HEK293T (cell line): ENCODE measurements at regions of chr1 and their contacts with region 1.

Region 1: GRCh38 chr1:46132529-46133180 is at the start of gene PIK3R3:
- DNase-seq: peak; percentile 95

Region 2: GRCh38 chr1:45892068-45892785 is 240.4 kb before region 1 on chr1:
- CTCF ChIA-PET with region 1: no interaction called
- POLR2A ChIA-PET with region 1: no interaction called
- DNase-seq: no peak

Region 3: DNA sequence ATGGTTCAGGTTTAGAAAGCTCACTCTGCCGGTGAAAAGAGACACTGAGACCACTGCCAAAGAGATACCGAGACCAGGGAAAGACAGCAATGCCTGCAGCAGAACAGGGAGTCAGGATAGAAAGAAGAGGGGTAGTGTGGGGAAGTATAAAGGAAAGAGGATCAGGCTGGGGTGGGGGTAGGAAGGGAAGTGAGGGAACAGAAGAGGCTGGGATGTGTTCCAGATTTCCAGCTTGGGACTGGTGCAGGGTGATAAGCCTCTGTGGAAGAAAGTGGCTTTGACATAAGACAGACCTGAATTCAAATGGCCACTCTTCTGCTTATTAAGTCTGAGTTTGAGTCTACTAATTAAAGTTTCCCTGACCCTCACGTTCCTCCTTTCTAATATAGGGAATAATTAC is 106.1 kb before region 1 on chr1:
- CTCF ChIA-PET with region 1: no interaction called
- POLR2A ChIA-PET with region 1: no interaction called
- DNase-seq: no peak

Region 4: DNA sequence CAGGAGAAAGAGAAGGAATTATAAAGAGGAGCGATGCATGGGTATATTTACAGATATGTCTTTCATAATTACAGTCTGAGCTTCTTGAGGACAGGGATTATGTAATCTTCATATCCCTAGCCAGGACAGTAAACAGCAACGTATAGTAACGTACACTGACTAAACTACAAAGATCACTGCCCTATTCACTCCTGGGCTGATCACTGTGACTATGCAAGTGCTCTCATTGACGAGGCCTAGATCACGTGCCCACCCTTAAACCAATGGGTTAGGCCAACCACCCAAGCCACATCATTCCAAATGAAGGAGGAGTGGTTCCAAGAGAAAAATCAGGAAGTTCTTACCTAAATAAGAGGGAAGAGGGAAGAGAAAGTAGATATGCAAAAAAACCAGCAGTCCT is 18.7 kb before region 1 on chr1:
- CTCF ChIA-PET with region 1: interaction called, 3 read pairs
- POLR2A ChIA-PET with region 1: interaction called, 10 read pairs
- DNase-seq: no peak

Region 5: DNA sequence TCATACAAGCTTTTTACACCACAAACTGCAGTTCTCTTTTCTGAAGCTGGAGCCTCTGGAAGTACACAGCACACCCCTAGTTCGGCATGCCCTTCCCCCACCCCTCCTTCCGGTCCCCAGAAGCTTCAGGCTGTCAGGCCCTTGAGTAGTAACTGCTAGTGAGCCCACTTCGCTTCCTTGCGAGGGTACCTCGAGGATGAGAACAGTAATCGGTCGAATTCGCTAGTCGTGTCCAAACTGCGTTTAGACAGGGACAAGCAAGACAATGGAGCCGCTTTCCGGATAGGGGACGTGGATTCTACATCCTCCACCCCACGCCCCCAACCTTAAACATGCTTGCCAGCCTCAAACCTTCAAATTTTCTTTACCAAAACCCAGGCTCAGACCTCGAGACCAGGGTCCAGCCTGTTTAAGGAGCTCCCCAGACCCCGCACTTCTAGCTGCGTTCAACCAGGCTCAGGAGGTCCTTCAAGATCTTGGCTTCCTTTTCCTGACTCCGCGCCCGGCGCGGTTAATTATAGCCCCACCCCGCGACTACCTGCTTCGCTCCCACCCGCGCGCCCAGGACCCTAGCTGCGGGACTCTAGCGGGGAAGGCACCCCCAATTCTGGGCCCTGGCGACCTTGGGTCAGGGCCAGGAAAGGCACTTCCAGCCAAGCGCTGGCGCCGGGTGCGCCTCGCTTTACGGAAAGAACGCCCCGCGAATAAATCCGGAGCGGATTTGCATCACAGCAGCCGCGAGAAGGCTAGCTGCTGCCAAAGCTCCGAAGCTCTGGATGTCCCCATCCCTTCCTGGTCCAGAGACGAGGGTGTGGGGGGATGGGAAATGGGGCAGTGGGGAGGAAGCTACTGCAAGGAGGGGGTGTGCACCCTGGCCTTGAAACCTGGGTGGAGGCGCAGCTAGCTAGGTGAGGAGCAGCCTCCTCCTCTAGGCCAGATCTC is 34.1 kb after region 1 on chr1:
- CTCF ChIA-PET with region 1: interaction called, 3 read pairs
- POLR2A ChIA-PET with region 1: interaction called, 10 read pairs
- DNase-seq: no peak

Region 6: DNA sequence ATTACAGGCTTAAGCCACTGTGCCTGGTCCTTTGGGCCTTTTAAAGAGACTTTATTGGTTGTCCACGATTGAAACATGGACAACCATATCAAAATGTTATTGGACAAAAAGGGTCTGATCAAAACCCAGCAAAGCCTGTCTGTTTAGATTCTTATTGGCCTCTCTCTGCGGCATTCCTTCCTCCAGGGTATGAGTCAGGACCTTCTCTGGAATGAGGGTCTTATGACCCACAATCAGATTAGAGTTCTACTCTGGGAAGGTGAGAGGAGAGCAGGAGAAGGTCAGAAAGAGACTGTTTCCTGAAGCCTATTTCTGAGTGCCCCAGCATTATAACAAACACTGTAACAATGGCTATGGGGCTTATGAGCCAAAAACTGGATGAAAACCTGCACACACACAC is 78.4 kb after region 1 on chr1:
- CTCF ChIA-PET with region 1: no interaction called
- POLR2A ChIA-PET with region 1: no interaction called
- DNase-seq: no peak